Dorsolateral prefrontal cortex (tissue), 120 donors: ENCODE measurements at regions of chr11 and their contacts with region 1.

Region 1: GRCh38 chr11:120235024-120235861 is 4.7 kb upstream of the POU2F3 start:
- DNase-seq: peak in 1 of 10 donors; percentile 18
- H3K4me3 ChIP-seq: no peak overlapping the region
- H3K27ac ChIP-seq: no peak overlapping the region
- H3K27me3 ChIP-seq: peaks cover 0 to 21% (median 11%) of the 10 kb centered on the region in 45 donors
- CTCF ChIP-seq: peak in 55 of 56 donors; percentile 14 to 77 (median 49)

Region 2: DNA sequence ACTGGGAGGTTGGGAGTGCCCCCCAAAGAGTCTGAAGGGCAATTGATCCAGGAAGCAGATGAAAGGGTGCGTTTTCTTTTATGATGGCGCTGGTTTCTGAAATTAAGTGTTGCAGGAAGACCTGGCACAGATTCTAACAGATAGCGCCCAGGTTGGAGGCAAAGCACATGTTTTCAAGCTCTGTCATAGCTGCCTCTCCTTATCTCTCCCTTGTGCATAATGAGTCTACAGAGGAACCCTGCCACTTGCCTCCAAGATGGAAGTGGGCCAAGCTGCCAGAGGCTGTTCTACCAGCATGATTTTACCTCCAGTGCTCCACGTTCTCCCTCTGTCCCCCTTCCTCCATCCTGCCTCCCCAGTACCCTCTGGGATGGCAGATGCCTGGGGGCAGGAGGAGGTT is 59.8 kb after region 1 on chr11:
- intact Hi-C with region 1: loop called in 1 of 2 experiments (anchors 5 kb)
- DNase-seq: no peak
- H3K4me3 ChIP-seq: no peak overlapping the region
- H3K27ac ChIP-seq: no peak overlapping the region
- H3K27me3 ChIP-seq: peaks cover 0 to 50% (median 4%) of the 10 kb centered on the region in 45 donors
- CTCF ChIP-seq: no peak